AG04450 (cell line): ENCODE measurements at regions of chr7 and their contacts with region 1.

Region 1: GRCh38 chr7:73851410-73852234 is 9.3 kb upstream of the METTL27 start:
- DNase-seq: peak; percentile 94
- H3K4me3 ChIP-seq: peak overlapping the region; percentile 29; the same call in 1 of the 2 replicates
- H3K27ac ChIP-seq: peak overlapping the region; percentile 100
- H3K27me3 ChIP-seq: no peaks in the 10 kb centered on the region
- CTCF ChIP-seq: no peak

Region 2: GRCh38 chr7:73811760-73812168 is 39.9 kb before region 1 on chr7:
- CTCF ChIA-PET with region 1: interaction called, 39 read pairs
- POLR2A ChIA-PET with region 1: no interaction called
- DNase-seq: no peak
- H3K4me3 ChIP-seq: no peak overlapping the region
- H3K27ac ChIP-seq: no peak overlapping the region
- H3K27me3 ChIP-seq: no peaks in the 10 kb centered on the region
- CTCF ChIP-seq: peak; percentile 72

Region 3: GRCh38 chr7:73822319-73823076 is 29.1 kb before region 1 on chr7:
- CTCF ChIA-PET with region 1: interaction called, 6 read pairs
- POLR2A ChIA-PET with region 1: interaction called, 10 read pairs
- DNase-seq: peak; percentile 54
- H3K4me3 ChIP-seq: no peak overlapping the region
- H3K27ac ChIP-seq: peak overlapping the region; percentile 68
- H3K27me3 ChIP-seq: no peaks in the 10 kb centered on the region
- CTCF ChIP-seq: no peak

Region 4: DNA sequence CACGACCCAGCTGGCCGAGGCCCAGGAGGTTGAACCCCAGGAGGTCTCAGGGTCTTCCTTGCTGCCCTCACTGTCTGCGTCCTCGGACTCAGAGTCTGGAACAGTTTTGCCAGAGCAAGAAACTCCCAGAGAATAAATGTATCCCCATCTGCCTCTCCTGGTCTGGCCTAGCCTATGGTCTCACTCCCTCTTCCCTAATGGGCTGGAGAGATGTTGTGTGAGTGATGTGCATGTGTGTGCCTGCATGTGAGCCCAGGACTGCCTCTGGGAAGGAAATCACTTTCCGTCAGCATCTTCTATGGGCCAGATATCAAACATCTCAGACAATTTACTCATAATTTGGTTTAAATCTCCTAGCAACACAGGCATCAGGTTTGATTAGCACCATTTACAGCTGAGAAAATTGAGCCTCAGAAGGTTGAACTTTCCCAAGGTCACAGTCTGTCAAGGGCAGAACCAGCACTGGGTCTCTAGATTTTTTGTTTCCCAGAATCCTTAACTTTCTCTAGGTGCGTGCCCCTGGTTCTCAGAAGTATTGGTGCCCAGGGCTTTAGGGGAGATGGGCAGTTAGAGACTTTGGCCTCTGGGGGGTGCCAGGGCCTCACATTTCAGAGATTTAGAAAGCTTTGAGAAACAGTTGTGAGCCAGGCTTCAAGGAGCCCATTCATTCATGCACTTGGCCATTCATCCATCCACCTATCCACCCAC is 14.3 kb after region 1 on chr7:
- CTCF ChIA-PET with region 1: interaction called, 27 read pairs
- POLR2A ChIA-PET with region 1: no interaction called
- DNase-seq: no peak
- H3K4me3 ChIP-seq: no peak overlapping the region
- H3K27ac ChIP-seq: no peak overlapping the region
- H3K27me3 ChIP-seq: no peaks in the 10 kb centered on the region
- CTCF ChIP-seq: peak; percentile 84